ENCODE measurements at regions of chr3 and their contacts with region 1.

Region 1: GRCh38 chr3:134600685-134601463 is 49.9 kb downstream of the KY start:
- DNase-seq: peak; percentile 74
- H3K4me3 Mint-ChIP-seq: no peak overlapping the region
- H3K27ac Mint-ChIP-seq: no peak overlapping the region
- H3K4me1 Mint-ChIP-seq: peaks cover 4% of the 10 kb centered on the region
- H3K27me3 Mint-ChIP-seq: peaks cover 5% of the 10 kb centered on the region

Region 2: DNA sequence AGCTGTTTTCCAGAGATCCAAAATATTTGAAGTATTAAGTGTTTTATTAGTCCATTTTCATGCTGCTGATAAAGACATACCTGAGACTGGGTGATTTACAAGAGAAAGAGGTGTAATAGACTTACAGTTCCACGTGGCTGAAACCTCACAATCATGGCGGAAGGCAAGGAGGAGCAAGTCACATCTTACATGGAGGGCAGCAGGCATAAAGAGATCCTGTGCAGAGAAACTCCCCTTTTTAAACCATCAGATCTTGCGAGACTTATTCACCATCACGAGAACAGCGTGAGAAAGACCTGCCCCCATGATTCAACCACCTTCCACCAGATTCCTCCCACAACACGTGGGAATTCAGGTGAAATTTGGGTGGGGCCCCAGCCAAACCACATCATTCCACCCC is 32.1 kb before region 1 on chr3:
- CTCF ChIA-PET with region 1: no interaction called
- intact Hi-C with region 1: no loop called
- DNase-seq: no peak
- H3K4me3 Mint-ChIP-seq: no peak overlapping the region
- H3K27ac Mint-ChIP-seq: no peak overlapping the region
- H3K4me1 Mint-ChIP-seq: no peaks in the 10 kb centered on the region
- H3K27me3 Mint-ChIP-seq: no peaks in the 10 kb centered on the region

Region 3: GRCh38 chr3:134640872-134641470 is 40.1 kb after region 1 on chr3:
- CTCF ChIA-PET with region 1: interaction called, 8 read pairs
- intact Hi-C with region 1: loop called (anchors 2 kb)
- DNase-seq: peak; percentile 19
- H3K4me3 Mint-ChIP-seq: no peak overlapping the region
- H3K27ac Mint-ChIP-seq: no peak overlapping the region
- H3K4me1 Mint-ChIP-seq: no peaks in the 10 kb centered on the region
- H3K27me3 Mint-ChIP-seq: peaks cover 5% of the 10 kb centered on the region

Region 4: GRCh38 chr3:134718726-134719125 is 117.9 kb after region 1 on chr3:
- CTCF ChIA-PET with region 1: no interaction called
- intact Hi-C with region 1: no loop called
- DNase-seq: no peak
- H3K4me3 Mint-ChIP-seq: no peak overlapping the region
- H3K27ac Mint-ChIP-seq: no peak overlapping the region
- H3K4me1 Mint-ChIP-seq: no peaks in the 10 kb centered on the region
- H3K27me3 Mint-ChIP-seq: peaks cover 3% of the 10 kb centered on the region

Region 5: GRCh38 chr3:134754768-134755559 is 154.1 kb after region 1 on chr3:
- CTCF ChIA-PET with region 1: interaction called, 25 read pairs
- intact Hi-C with region 1: loop called (anchors 1 kb)
- DNase-seq: peak; percentile 62
- H3K4me3 Mint-ChIP-seq: no peak overlapping the region
- H3K27ac Mint-ChIP-seq: no peak overlapping the region
- H3K4me1 Mint-ChIP-seq: no peaks in the 10 kb centered on the region
- H3K27me3 Mint-ChIP-seq: peaks cover 4% of the 10 kb centered on the region

Region 6: GRCh38 chr3:134766290-134766689 is 165.4 kb after region 1 on chr3:
- CTCF ChIA-PET with region 1: no interaction called
- intact Hi-C with region 1: no loop called
- DNase-seq: no peak
- H3K4me3 Mint-ChIP-seq: no peak overlapping the region
- H3K27ac Mint-ChIP-seq: no peak overlapping the region
- H3K4me1 Mint-ChIP-seq: no peaks in the 10 kb centered on the region
- H3K27me3 Mint-ChIP-seq: no peaks in the 10 kb centered on the region

Region 7: GRCh38 chr3:134838599-134838998 is 237.7 kb after region 1 on chr3:
- CTCF ChIA-PET with region 1: no interaction called
- intact Hi-C with region 1: loop called (anchors 2 kb)
- DNase-seq: peak; percentile 9
- H3K4me3 Mint-ChIP-seq: no peak overlapping the region
- H3K27ac Mint-ChIP-seq: no peak overlapping the region
- H3K4me1 Mint-ChIP-seq: no peaks in the 10 kb centered on the region
- H3K27me3 Mint-ChIP-seq: peaks cover 5% of the 10 kb centered on the region

Region 8: GRCh38 chr3:135503760-135504686 is 903.1 kb after region 1 on chr3:
- CTCF ChIA-PET with region 1: interaction called, 3 read pairs
- intact Hi-C with region 1: loop called (anchors 5 kb)
- DNase-seq: peak; percentile 53
- H3K4me3 Mint-ChIP-seq: no peak overlapping the region
- H3K27ac Mint-ChIP-seq: no peak overlapping the region
- H3K4me1 Mint-ChIP-seq: no peaks in the 10 kb centered on the region
- H3K27me3 Mint-ChIP-seq: peaks cover 4% of the 10 kb centered on the region

Region 9: GRCh38 chr3:135895106-135895733 is 1294.3 kb after region 1 on chr3:
- CTCF ChIA-PET with region 1: no interaction called
- intact Hi-C with region 1: loop called (anchors 1 kb)
- DNase-seq: peak; percentile 69
- H3K4me3 Mint-ChIP-seq: no peak overlapping the region
- H3K27ac Mint-ChIP-seq: no peak overlapping the region
- H3K4me1 Mint-ChIP-seq: no peaks in the 10 kb centered on the region
- H3K27me3 Mint-ChIP-seq: peaks cover 3% of the 10 kb centered on the region

Region 10: GRCh38 chr3:136042608-136043221 is 1441.8 kb after region 1 on chr3:
- CTCF ChIA-PET with region 1: interaction called, 4 read pairs
- intact Hi-C with region 1: loop called (anchors 1 kb)
- DNase-seq: no peak
- H3K4me3 Mint-ChIP-seq: no peak overlapping the region
- H3K27ac Mint-ChIP-seq: no peak overlapping the region
- H3K4me1 Mint-ChIP-seq: no peaks in the 10 kb centered on the region
- H3K27me3 Mint-ChIP-seq: peaks cover 11% of the 10 kb centered on the region

Measured in activated naive CD4-positive, alpha-beta T cell treated with anti-CD3 and anti-CD28 coated beads for 36 hours (primary cell).